ENCODE measurements at regions of chr1 and their contacts with region 1.

Region 1: GRCh38 chr1:119743781-119744597 is 24.7 kb downstream of the HMGCS2 start:
- DNase-seq: peak; percentile 39
- H3K4me3 Mint-ChIP-seq: no peak overlapping the region
- H3K27ac Mint-ChIP-seq: peak overlapping the region; percentile 15
- H3K4me1 Mint-ChIP-seq: peaks cover 10% of the 10 kb centered on the region
- H3K27me3 Mint-ChIP-seq: no peaks in the 10 kb centered on the region
- CTCF ChIP-seq: peak; percentile 75

Region 2: GRCh38 chr1:119808972-119809550 is 65.1 kb after region 1 on chr1:
- CTCF ChIA-PET with region 1: interaction called, 8 read pairs
- intact Hi-C with region 1: loop called (anchors 1 kb)
- DNase-seq: peak; percentile 68
- H3K4me3 Mint-ChIP-seq: no peak overlapping the region
- H3K27ac Mint-ChIP-seq: no peak overlapping the region
- H3K4me1 Mint-ChIP-seq: no peaks in the 10 kb centered on the region
- H3K27me3 Mint-ChIP-seq: peaks cover 7% of the 10 kb centered on the region
- CTCF ChIP-seq: peak; percentile 63

Region 3: DNA sequence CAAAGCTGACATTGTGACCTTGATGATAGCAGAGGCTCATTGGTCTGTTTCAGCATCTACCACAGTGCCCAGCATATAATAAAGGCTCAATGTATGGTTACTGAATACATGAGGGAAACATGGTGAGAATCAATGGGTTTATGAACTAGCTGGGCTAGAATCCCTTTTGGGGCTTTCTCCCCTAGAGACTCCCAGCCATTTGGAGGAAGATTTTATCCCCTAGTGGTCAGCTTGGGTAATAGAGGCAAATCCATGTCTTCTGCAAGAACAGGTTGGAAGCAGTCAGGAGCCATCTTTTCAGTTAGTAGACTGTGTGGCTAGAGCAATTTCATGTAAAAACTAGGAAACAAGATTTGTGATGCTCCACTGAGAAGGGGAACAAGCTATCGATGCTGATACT is 83.0 kb after region 1 on chr1:
- CTCF ChIA-PET with region 1: no interaction called
- intact Hi-C with region 1: no loop called
- DNase-seq: no peak
- H3K4me3 Mint-ChIP-seq: no peak overlapping the region
- H3K27ac Mint-ChIP-seq: no peak overlapping the region
- H3K4me1 Mint-ChIP-seq: no peaks in the 10 kb centered on the region
- H3K27me3 Mint-ChIP-seq: no peaks in the 10 kb centered on the region
- CTCF ChIP-seq: peak; percentile 40

Region 4: DNA sequence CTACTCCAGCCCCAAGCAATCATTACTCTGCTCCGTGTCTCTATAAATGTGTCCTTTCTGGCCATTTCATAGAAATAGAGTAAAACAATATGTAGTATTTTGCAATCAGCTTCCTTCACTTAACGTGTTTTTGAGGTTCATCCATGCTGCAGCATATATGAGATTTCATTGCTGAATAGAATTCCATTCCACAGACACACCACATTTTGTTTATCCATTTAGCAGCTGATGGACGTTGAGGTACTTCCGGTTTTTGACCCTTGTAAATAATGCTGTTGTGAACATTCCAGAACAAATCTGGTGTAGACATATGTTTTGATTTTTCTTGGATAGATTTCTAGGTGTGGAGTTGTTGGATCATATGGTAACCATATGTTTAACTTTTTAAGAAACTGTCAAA is 121.6 kb after region 1 on chr1:
- CTCF ChIA-PET with region 1: no interaction called
- intact Hi-C with region 1: loop called (anchors 5 kb)
- DNase-seq: no peak
- H3K4me3 Mint-ChIP-seq: no peak overlapping the region
- H3K27ac Mint-ChIP-seq: no peak overlapping the region
- H3K4me1 Mint-ChIP-seq: peaks cover 6% of the 10 kb centered on the region
- H3K27me3 Mint-ChIP-seq: no peaks in the 10 kb centered on the region
- CTCF ChIP-seq: no peak